Right cardiac atrium (tissue), 5 donors: ENCODE measurements at regions of chr9 and their contacts with region 1.

Region 1: DNA sequence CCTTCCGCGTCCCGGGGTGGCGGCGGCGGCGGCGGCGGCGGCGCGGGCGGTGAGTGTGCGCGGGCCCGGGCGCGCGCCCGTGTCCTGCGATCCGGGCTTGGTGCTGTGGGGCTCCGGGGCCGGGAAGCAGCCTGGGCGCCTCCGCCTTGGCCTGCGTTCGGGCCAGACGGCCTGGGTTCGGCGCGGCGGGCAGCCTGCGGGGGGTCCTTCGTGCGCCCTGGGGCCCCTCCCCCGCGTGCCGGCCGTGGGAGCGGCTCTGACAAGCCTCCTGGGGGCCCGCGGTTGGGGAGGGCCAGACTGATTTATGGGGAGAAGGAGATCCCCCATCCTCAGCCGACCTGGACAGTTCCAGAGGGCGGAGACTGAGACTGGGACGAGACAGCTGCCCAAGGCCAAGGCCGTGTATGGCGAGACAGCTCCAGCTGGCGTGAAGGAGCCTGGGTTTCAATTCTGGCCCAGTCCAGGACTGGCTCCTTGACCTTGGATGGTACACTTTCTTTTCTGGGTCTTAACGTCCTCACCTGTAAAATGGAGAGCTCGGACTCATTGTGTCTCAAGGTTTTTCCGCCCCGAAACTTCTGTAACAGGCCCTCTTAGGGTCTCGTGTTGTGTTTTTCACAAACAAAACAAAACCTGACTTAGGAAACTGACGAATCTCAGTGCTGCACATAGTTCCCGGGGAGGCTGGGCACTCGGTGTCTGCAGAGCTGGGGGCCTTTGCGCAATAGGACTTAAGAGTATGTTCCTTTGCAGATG is 603 bp downstream of the TMEM268 start:
- DNase-seq: peak; percentile 61 to 86 (median 81)
- ATAC-seq: peak; percentile 87 to 88
- H3K4me3 ChIP-seq: peak overlapping the region; percentile 76
- H3K27ac ChIP-seq: peak overlapping the region; percentile 44
- H3K4me1 ChIP-seq: no peaks in the 10 kb centered on the region
- H3K27me3 ChIP-seq: no peaks in the 10 kb centered on the region

Region 2: DNA sequence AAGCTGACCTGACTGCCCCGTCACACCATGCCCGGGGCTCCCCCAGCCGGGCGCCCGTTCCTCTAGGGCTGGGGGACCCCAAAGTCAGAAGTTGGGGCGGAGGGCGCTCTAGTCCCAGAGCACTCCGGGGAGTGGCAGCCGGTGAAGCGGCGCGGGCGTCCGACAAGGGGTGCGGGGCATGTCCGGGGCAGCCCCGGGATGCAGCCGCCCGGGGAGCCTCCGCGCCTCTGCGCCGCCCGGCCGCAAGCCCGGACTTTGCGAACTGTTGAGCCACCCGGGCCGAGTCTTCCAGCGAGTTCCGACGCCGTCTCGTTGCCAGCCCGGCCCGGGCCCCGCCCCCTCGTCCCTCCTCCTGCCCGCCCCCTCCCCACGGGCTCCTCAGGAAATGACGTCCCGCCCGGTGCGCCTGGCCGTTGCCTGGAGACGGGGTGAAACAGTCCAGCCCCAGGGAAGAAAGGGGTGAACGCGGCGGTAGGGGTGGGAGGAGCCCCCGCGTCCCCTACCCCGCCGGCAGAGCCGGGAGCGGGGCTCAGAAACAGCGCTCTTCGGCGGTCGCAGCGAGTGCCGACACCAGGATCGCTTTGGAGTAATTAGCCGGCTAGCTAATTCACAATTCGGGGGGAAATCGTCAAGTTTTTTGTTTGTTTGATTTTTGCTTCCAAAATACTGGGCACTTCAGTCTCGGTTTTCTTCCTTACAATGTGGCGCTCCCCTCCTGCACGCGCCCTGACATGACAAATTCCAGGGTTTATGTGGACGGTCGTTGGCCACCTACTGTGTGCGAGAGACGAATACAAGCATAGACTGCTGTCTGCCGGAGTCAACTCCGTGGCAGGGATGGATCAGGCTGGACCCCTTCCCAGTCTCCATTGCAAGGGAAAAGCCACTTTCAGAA is 106.3 kb before region 1 on chr9 and contains the start of gene WHRN:
- intact Hi-C with region 1: loop called in 1 of 4 experiments (anchors 10 kb)
- DNase-seq: peak; percentile 95 to 97 (median 96)
- ATAC-seq: peak; percentile 97
- H3K4me3 ChIP-seq: peak within 1 kb of the TSS; percentile 87
- H3K27ac ChIP-seq: no peak within 1 kb of the TSS
- H3K4me1 ChIP-seq: no peaks in the 10 kb centered on the region
- H3K27me3 ChIP-seq: no peaks in the 10 kb centered on the region
- total RNA-seq, gene WHRN: 12.7 to 20.3 (median 14.1) TPM